ENCODE measurements at regions of chr5 and their contacts with region 1.

Region 1: DNA sequence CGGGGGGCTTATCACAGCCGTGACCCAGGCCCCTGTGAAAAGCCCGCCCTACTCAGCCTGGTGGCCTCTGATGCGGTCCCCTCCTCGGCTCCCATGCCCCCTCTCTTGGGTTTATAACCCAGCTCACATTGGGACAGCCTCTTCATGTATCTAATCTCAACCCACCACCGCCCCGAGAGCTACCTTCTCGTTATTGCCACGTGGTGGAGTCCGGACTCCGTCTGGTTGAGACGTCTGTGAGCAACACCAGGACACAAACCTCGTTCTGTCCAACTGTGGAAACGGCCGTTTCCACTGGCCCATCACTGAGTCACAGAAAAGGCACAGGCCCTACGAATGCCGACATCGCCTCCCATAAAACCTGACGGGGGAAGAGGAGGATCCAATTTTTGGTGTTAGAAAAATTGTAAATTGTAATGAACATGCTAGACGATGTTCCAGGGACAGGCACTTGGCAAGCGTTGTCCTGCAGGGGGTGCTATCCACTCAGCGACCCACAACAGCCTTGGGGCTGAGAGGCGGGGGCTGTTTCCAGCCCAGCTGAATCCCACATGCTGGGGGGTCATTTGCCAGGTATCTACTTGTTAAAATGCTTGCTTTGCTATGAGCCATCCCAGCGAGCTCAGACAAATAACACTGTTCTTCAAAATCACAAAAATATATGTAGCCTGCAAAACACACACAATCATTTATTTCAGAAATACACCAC is 37.3 kb upstream of the N4BP3 start:
- DNase-seq: peak; percentile 81 to 84 (median 83)
- ATAC-seq: peak; percentile 96
- H3K4me3 ChIP-seq: peak overlapping the region; percentile 19; the same call in 1 of the 2 replicates
- H3K27ac ChIP-seq: no peak overlapping the region; the same call in 2 of the 3 replicates
- H3K4me1 ChIP-seq: peaks cover 10 to 14% of the 10 kb centered on the region in 2 experiments; a peak in 4 of 5 replicates
- H3K27me3 ChIP-seq: peaks cover 3 to 4% of the 10 kb centered on the region in 2 experiments; a peak in 2 of 5 replicates
- CTCF ChIP-seq: peak; percentile 89 to 98 (median 91)
- EP300 ChIP-seq: no peak
- POLR2A ChIP-seq: no peak
- RAD21 ChIP-seq: peak; percentile 97 to 99

Region 2: DNA sequence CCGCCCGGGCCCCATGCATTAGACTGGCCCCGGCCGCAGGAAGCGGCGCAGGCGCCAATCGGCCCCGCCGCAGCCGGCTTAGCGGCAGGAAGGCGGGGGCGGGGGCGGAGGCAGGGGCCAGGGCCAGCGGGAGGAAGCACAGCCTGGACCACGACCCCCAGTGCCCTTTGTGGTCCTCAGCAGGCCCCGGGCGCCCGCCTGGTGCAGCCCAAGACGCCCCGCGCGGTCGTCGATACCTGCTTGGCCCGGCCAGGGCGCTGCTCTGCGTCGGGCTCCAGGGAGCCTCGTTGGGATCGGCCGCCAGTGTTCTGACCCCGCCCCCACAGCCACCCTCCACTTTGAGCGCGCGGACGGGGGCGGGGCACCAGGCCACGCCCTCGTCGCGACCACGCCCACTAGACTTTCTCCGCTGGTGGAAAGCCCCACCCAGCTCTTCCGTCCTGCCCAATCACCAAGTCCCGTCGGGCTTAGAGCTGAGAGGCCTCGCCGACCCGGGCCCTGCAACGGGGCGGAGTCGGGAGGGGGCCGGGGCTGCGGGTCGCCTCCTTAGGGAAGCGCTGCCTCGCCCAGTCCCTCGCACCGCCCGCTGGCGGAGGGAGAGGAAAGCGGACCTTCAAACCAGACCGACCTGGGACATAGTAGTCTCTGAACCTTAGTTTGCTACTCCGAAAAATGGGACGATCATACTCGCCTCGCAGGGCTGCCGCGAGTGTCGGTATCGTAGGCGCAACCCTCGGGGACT is 578.5 kb before region 1 on chr5 and contains the start of gene PDLIM7:
- CTCF ChIA-PET with region 1: no interaction called
- POLR2A ChIA-PET with region 1: no interaction called
- in situ Hi-C with region 1: no loop called
- intact Hi-C with region 1: no loop called
- DNase-seq: peak; percentile 97 to 99 (median 98)
- ATAC-seq: peak; percentile 81
- H3K4me3 ChIP-seq: peak within 1 kb of the TSS; percentile 82
- H3K27ac ChIP-seq: peak within 1 kb of the TSS; percentile 95
- H3K4me1 ChIP-seq: peaks cover 57 to 85% of the 10 kb centered on the region in 2 experiments
- H3K27me3 ChIP-seq: no peaks in the 10 kb centered on the region
- CTCF ChIP-seq: peak; percentile 31 to 37 (median 35); a peak in 2 of 6 replicates
- EP300 ChIP-seq: no peak; the same call in none of the 2 replicates
- POLR2A ChIP-seq: peak; percentile 97
- RAD21 ChIP-seq: 0 out of 4 replicates have a peak, but pooled peaks of 1 of the 2 experiments have one; percentile 2
- polyA plus RNA-seq, gene PDLIM7: 2.1 to 4.1 TPM

Region 3: GRCh38 chr5:178146020-178146820 is 70.2 kb after region 1 on chr5:
- CTCF ChIA-PET with region 1: interaction called, 33 read pairs
- POLR2A ChIA-PET with region 1: interaction called, 7 read pairs
- in situ Hi-C with region 1: loop called (anchors 5 kb)
- intact Hi-C with region 1: loop called (anchors 1 kb)
- DNase-seq: peak; percentile 64 to 75 (median 69)
- ATAC-seq: peak; percentile 88
- H3K4me3 ChIP-seq: no peak overlapping the region
- H3K27ac ChIP-seq: no peak overlapping the region
- H3K4me1 ChIP-seq: peaks cover 0 to 12% of the 10 kb centered on the region in 2 experiments; a peak in 3 of 5 replicates
- H3K27me3 ChIP-seq: no peaks in the 10 kb centered on the region
- CTCF ChIP-seq: peak; percentile 78 to 87 (median 82)
- EP300 ChIP-seq: no peak
- POLR2A ChIP-seq: peak; percentile 35; the same call in 1 of the 2 replicates
- RAD21 ChIP-seq: peak; percentile 63 to 80

Region 4: GRCh38 chr5:178153573-178154343 is 77.8 kb after region 1 on chr5 and contains the start of gene NHP2:
- CTCF ChIA-PET with region 1: interaction called, 4 read pairs
- POLR2A ChIA-PET with region 1: interaction called, 4 read pairs
- in situ Hi-C with region 1: loop called (anchors 5 kb)
- intact Hi-C with region 1: no loop called
- DNase-seq: peak; percentile 97 to 98 (median 98)
- ATAC-seq: peak; percentile 98
- H3K4me3 ChIP-seq: peak within 1 kb of the TSS; percentile 62
- H3K27ac ChIP-seq: peak within 1 kb of the TSS; percentile 46
- H3K4me1 ChIP-seq: peaks cover 9 to 26% of the 10 kb centered on the region in 2 experiments; a peak in 4 of 5 replicates
- H3K27me3 ChIP-seq: no peaks in the 10 kb centered on the region
- CTCF ChIP-seq: no peak
- EP300 ChIP-seq: no peak; the same call in 1 of the 2 replicates
- POLR2A ChIP-seq: peak; percentile 84
- RAD21 ChIP-seq: no peak
- polyA plus RNA-seq, gene NHP2: 52.8 to 124 TPM

Region 5: GRCh38 chr5:178163772-178164735 is 88.1 kb after region 1 on chr5:
- CTCF ChIA-PET with region 1: interaction called, 108 read pairs
- POLR2A ChIA-PET with region 1: interaction called, 10 read pairs
- in situ Hi-C with region 1: no loop called
- intact Hi-C with region 1: loop called (anchors 1 kb)
- DNase-seq: peak; percentile 88 to 90 (median 89)
- ATAC-seq: peak; percentile 98
- H3K4me3 ChIP-seq: no peak overlapping the region
- H3K27ac ChIP-seq: no peak overlapping the region
- H3K4me1 ChIP-seq: peaks cover 3 to 15% of the 10 kb centered on the region in 2 experiments; a peak in 3 of 5 replicates
- H3K27me3 ChIP-seq: peaks cover 3 to 18% of the 10 kb centered on the region in 2 experiments; a peak in 2 of 5 replicates
- CTCF ChIP-seq: peak; percentile 97 to 98 (median 98)
- EP300 ChIP-seq: peak; percentile 18; the same call in 1 of the 2 replicates
- POLR2A ChIP-seq: no peak
- RAD21 ChIP-seq: peak; percentile 96 to 99

Measured in K562 (cell line).